Calu3 (cell line): ENCODE measurements at regions of chr10 and their contacts with region 1.

Region 1: DNA sequence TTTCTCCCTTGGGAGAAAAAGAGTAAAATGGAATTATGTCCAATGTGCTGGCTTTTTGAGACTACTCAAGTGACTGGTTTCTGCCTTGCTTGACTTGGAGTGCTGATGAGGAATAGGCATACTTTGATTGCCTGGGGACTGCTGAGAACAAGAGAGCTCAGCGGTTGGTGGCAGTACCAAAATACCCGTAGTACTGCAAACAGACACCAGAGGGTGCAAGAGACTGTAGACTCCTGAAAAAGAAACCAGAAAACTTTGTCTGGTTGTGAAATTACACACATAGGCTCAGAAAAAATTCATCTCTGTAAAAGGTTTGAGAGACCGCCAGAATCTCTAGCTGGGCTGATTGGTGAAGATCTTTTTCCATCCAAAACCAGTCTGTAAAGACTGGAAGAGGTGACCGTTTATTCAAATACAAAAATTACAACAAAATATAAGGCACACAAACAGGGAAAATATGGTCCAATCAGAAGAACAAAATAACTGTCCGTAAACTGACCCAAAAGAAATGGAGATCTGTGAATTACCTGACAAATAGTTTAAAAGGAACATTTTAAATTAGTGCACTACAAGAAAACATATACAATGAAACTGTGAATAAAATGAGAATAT is 18.5 kb downstream of the BICC1 start:
- DNase-seq: peak; percentile 90
- H3K4me3 Mint-ChIP-seq: peak overlapping the region; percentile 50
- H3K27ac Mint-ChIP-seq: peak overlapping the region; percentile 66
- H3K4me1 Mint-ChIP-seq: peaks cover 53% of the 10 kb centered on the region
- H3K27me3 Mint-ChIP-seq: no peaks in the 10 kb centered on the region
- CTCF ChIP-seq: peak; percentile 91

Region 2: DNA sequence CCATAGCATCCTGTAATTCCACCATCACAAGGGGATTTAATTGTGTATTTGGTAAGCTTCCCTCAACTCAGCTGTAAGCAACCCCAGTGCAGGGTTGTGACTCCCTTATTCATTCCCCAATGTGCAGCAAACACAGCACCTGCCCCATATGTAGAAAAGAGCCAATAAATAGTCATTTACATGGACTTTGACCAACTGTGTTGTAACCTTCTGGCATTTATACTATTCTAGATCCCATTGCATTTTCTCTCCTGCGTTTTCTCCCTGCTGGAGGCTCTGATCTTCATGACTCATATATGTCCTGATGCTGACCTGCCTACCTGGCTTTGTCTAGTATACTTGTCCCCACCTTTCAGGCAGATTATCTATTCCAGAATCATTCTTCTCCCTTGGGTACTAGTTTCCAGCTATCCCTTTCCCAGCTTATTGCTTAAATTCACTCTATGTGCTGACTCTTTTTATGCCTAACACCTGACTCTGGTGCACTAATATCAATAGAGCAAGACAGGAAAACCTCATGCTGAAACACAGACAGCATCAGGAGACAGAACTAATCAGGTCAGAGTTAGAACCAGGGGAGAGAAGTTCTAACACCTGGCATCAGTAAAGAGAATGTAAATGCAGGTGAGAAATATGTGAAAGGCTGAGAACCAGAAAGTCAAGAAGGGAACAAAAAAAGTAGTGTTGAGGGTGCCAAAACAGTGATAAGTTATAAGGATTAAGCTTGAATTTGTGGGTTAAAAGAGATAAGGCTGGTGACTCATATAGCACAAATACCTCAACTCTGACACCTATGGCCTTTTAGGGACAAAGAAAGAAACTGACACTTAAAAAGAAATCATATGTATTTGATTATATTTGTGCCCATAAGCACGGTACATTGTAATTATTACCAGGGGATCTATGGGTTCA is 666.2 kb before region 1 on chr10:
- CTCF ChIA-PET with region 1: no interaction called
- intact Hi-C with region 1: no loop called
- DNase-seq: peak; percentile 48
- H3K4me3 Mint-ChIP-seq: peak overlapping the region; percentile 21
- H3K27ac Mint-ChIP-seq: peak overlapping the region; percentile 81
- H3K4me1 Mint-ChIP-seq: peaks cover 64% of the 10 kb centered on the region
- H3K27me3 Mint-ChIP-seq: no peaks in the 10 kb centered on the region
- CTCF ChIP-seq: no peak

Region 3: DNA sequence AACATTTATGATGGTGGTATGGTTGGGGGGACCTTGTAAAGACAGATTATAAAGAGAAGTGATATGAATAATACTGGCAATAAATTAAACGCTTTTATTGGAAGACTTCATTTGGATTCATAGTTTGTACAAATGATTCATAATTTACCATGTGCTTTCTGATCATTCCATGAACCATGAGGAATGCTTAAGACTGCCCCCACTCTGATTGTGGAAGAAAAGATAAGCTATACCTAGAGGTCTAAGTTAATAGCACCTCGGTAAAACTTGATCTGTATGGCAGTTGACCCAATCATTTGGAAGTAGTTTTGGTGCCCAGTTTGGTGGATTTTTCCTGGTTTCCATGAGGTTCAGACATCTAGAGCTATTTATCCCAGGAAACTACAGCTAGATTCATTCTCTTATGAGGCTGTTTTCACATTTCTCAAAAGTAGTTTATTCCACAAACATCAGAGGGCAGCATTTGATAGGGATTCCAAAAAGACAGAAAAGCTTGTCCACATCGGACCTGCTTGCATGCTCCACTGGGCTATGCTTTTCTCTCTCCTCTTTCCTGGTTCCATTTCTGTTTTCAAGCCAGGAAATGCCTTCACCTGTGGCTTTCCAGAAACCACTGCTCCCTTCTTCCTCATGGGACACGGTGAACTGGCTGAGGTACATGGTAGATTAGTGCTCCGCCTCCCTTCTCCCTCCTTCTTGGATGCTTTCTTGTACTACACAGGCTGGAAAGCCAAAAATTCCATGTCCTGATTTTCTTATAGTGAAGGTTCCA is 116.7 kb before region 1 on chr10:
- CTCF ChIA-PET with region 1: interaction called, 52 read pairs
- intact Hi-C with region 1: no loop called
- DNase-seq: peak; percentile 63
- H3K4me3 Mint-ChIP-seq: no peak overlapping the region
- H3K27ac Mint-ChIP-seq: no peak overlapping the region
- H3K4me1 Mint-ChIP-seq: peaks cover 32% of the 10 kb centered on the region
- H3K27me3 Mint-ChIP-seq: no peaks in the 10 kb centered on the region
- CTCF ChIP-seq: peak; percentile 71

Region 4: DNA sequence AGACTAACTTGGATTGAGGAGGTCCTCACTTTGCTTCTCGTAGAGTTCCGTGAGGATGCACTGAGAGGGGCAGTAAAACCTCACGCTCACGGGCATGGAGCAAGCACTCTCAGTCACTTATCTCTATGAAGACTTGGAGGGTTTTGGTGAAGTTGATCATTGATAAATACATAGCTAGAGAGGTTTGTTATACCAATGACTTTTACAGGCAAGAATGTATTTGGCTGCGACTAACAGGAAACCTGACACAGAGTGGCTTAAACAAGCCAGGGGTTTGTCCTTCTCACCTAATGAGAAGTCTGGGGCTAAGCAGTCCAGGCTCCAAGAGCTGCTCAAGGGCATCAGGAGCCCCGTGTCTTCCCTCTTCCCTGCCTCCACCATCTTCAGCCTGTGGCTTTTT is 12.4 kb before region 1 on chr10:
- CTCF ChIA-PET with region 1: interaction called, 19 read pairs
- intact Hi-C with region 1: no loop called
- DNase-seq: peak; percentile 63
- H3K4me3 Mint-ChIP-seq: peak overlapping the region; percentile 77
- H3K27ac Mint-ChIP-seq: peak overlapping the region; percentile 89
- H3K4me1 Mint-ChIP-seq: peaks cover 60% of the 10 kb centered on the region
- H3K27me3 Mint-ChIP-seq: no peaks in the 10 kb centered on the region
- CTCF ChIP-seq: no peak

Region 5: GRCh38 chr10:58588673-58589265 is 57.6 kb after region 1 on chr10:
- CTCF ChIA-PET with region 1: interaction called, 7 read pairs
- intact Hi-C with region 1: loop called (anchors 5 kb)
- DNase-seq: peak; percentile 19
- H3K4me3 Mint-ChIP-seq: no peak overlapping the region
- H3K27ac Mint-ChIP-seq: no peak overlapping the region
- H3K4me1 Mint-ChIP-seq: peaks cover 64% of the 10 kb centered on the region
- H3K27me3 Mint-ChIP-seq: no peaks in the 10 kb centered on the region
- CTCF ChIP-seq: peak; percentile 21

Region 6: GRCh38 chr10:58704671-58705141 is 173.5 kb after region 1 on chr10:
- CTCF ChIA-PET with region 1: interaction called, 11 read pairs
- intact Hi-C with region 1: no loop called
- DNase-seq: no peak
- H3K4me3 Mint-ChIP-seq: no peak overlapping the region
- H3K27ac Mint-ChIP-seq: no peak overlapping the region
- H3K4me1 Mint-ChIP-seq: peaks cover 22% of the 10 kb centered on the region
- H3K27me3 Mint-ChIP-seq: no peaks in the 10 kb centered on the region
- CTCF ChIP-seq: no peak

Region 7: DNA sequence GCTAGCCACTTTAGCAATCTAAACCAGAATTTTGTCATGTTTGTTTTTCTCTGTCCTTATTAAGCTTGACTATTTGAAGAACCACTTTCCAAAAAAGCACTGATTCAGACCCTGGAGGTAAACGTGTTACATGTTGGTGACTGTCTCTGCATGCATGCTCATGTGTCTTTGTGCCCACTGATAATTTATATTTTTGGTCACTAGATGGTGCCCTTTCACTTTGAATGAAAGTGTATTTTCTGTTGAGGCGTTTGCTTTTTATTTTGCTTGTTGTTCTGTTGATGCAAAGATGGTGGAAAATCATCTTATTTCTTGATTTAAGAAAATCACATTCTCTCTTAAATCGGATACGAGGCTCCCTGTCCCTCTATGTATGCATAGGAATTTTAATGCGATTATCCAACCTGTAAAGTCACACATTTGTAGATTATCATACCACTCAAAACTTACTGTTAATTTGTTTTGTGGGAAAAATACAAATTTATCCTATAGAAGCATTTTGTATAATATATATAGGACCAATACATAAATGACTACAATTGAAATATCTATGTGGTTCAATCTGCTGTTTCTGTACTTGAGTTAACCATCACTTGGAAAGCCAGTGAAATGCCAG is 250.8 kb after region 1 on chr10:
- CTCF ChIA-PET with region 1: no interaction called
- intact Hi-C with region 1: loop called (anchors 2 kb)
- DNase-seq: peak; percentile 23
- H3K4me3 Mint-ChIP-seq: no peak overlapping the region
- H3K27ac Mint-ChIP-seq: no peak overlapping the region
- H3K4me1 Mint-ChIP-seq: peaks cover 26% of the 10 kb centered on the region
- H3K27me3 Mint-ChIP-seq: no peaks in the 10 kb centered on the region
- CTCF ChIP-seq: peak; percentile 73